CD14-positive monocyte (primary cell): ENCODE measurements at regions of chr3 and their contacts with region 1.

Region 1: DNA sequence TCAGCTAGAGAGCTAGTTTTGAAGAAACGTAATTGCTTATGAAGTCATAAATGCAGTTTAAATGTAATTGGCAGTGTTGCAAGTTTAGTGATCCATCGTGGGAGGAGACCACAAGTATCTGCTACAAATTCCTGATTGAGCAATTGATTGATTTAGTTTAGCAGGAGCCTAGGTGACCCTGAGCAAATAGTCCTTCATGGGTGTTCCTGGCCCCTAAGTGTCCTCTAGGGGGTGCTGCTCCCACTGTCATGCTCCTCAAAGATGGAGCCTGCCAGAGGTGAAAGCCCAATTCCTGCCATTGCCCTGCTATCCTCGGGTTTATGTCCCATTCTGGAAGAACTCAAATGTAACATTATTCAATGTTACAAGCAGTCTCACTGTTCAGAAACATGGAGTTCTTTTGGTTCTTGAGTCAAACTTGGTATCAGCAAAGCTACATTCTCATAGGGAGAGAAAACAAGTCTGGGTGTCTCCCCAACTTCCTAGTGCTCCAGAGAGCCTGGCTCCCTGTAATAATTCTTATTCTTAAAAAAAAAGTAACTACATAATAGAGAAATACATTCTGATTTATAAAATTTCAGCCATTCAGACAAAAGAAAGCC is 29.8 kb upstream of the SENP5 start:
- DNase-seq: peak; percentile 58 to 75 (median 68)
- H3K4me3 ChIP-seq: no peak overlapping the region
- H3K4me3 Mint-ChIP-seq: no peak overlapping the region
- H3K27ac ChIP-seq: no peak overlapping the region
- H3K27ac Mint-ChIP-seq: no peak overlapping the region
- H3K4me1 ChIP-seq: no peaks in the 10 kb centered on the region
- H3K4me1 Mint-ChIP-seq: peaks cover 2% of the 10 kb centered on the region
- H3K27me3 ChIP-seq: no peaks in the 10 kb centered on the region
- H3K27me3 Mint-ChIP-seq: no peaks in the 10 kb centered on the region
- CTCF ChIP-seq: peak; percentile 92

Region 2: DNA sequence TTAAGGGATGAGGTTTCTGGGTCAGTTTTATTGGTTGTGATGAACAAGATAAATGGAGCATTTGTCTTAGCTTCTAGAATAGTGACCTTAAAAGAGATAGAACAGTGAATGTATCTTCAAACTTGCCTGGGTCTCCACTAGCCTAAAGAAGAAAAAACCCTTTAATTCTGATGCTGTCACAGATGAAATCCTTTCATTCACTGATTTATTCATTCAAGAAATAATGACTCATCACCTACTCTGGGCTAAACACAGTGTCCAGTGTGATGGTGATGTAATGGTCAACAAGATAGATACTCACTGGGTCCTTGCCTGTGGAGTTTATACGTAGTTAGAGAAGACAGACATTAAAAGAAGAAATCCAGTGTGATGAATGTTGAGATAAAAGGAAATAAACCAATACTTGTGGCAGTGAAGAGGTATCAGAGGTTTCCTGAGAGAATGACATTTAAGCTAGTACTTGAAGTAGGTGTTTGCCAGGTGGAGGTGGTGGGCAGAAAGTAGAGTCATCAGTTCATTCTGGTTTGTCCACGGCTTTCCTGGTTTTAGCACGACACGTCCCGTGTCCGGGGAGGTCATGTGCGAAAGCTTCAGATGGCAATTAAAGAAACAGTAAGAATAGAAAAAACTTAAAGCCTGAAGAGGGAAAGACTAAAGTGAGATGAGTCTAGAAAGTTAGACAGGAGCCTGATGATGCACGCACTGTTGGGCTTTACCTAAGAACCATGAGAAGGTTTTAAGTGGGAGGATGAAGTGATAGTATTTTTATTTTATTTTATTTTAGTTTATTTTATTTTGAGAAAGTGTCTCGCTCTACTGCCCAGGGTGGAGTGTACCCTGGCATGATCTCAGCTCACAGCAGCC is 79.8 kb before region 1 on chr3:
- intact Hi-C with region 1: no loop called
- DNase-seq: peak in 1 of 3 donors; percentile 17
- H3K4me3 ChIP-seq: no peak overlapping the region
- H3K4me3 Mint-ChIP-seq: no peak overlapping the region
- H3K27ac ChIP-seq: peak overlapping the region in 1 of 2 donors; percentile 22
- H3K27ac Mint-ChIP-seq: peak overlapping the region in 5 of 7 donors; percentile 15 to 82 (median 71)
- H3K4me1 ChIP-seq: no peaks in the 10 kb centered on the region
- H3K4me1 Mint-ChIP-seq: peaks cover 31% of the 10 kb centered on the region
- H3K27me3 ChIP-seq: no peaks in the 10 kb centered on the region
- H3K27me3 Mint-ChIP-seq: no peaks in the 10 kb centered on the region
- CTCF ChIP-seq: no peak

Region 3: GRCh38 chr3:196969660-196970546 is 132.0 kb after region 1 on chr3:
- intact Hi-C with region 1: loop called (anchors 2 kb)
- DNase-seq: peak; percentile 51 to 70 (median 67)
- H3K4me3 ChIP-seq: peak overlapping the region; percentile 48 to 82 (median 59)
- H3K4me3 Mint-ChIP-seq: peak overlapping the region; percentile 62 to 66
- H3K27ac ChIP-seq: peak overlapping the region in 1 of 2 donors; percentile 73
- H3K27ac Mint-ChIP-seq: peak overlapping the region in 1 of 7 donors; percentile 25
- H3K4me1 ChIP-seq: peaks cover 12 to 13% of the 10 kb centered on the region in 2 donors
- H3K4me1 Mint-ChIP-seq: peaks cover 16% of the 10 kb centered on the region
- H3K27me3 ChIP-seq: no peaks in the 10 kb centered on the region
- H3K27me3 Mint-ChIP-seq: peaks cover 16 to 23% (median 17%) of the 10 kb centered on the region in 3 donors
- CTCF ChIP-seq: peak; percentile 95